Calu3 (cell line): ENCODE measurements at regions of chr14 and their contacts with region 1.

Region 1: GRCh38 chr14:63867933-63868921 is 15.4 kb downstream of the SYNE2 start:
- DNase-seq: no peak
- H3K4me3 Mint-ChIP-seq: peak overlapping the region; percentile 40
- H3K27ac Mint-ChIP-seq: peak overlapping the region; percentile 64
- H3K4me1 Mint-ChIP-seq: peaks cover 59% of the 10 kb centered on the region
- H3K27me3 Mint-ChIP-seq: no peaks in the 10 kb centered on the region
- CTCF ChIP-seq: no peak

Region 2: DNA sequence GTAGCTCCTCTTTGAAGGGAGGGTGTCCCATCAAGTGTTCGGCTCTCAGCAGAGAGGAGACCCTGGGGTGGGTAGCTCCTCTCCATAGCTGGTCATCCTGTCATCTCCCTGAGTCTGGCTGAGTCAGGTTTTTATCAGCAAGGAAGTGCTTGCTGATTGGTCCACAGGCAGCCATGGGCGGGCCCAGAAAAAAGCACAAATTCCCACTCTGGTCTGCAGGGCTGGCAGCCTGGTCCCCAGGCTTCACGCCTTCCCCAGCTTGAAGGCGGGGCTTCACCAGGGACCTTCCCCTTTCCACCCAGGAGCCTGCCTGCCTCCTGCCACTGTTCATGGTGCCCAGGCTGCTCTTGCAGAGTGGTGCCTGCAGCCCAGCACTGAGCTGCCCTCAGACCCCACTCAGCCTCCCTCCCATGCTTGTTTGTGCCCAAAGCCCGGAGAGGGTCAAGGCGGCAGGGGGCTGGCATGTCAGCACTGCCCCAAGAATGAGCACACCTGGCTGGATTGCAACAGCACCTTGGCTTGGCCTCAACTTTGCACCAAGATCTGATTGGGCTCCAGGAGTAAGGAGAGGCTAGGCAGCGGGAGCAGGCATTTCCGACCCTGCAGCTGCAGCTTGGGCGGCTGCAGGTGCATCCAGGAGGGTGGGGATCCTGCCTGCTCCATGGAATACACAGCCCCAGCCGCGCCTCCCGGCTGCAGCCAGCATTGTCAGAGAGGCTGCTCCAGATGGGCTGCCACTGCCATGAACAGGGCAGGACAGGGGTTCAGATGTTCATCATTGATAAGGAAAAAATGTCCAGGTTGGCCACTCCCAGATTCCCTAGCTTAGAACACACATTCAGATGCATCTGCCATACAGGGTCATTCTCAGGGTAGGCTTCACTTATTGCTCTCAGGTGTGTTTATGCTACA is 204.5 kb before region 1 on chr14:
- CTCF ChIA-PET with region 1: no interaction called
- intact Hi-C with region 1: loop called (anchors 10 kb)
- DNase-seq: peak; percentile 76
- H3K4me3 Mint-ChIP-seq: no peak overlapping the region
- H3K27ac Mint-ChIP-seq: no peak overlapping the region
- H3K4me1 Mint-ChIP-seq: peaks cover 34% of the 10 kb centered on the region
- H3K27me3 Mint-ChIP-seq: no peaks in the 10 kb centered on the region
- CTCF ChIP-seq: no peak

Region 3: GRCh38 chr14:63745858-63746425 is 122.3 kb before region 1 on chr14:
- CTCF ChIA-PET with region 1: no interaction called
- intact Hi-C with region 1: no loop called
- DNase-seq: peak; percentile 6
- H3K4me3 Mint-ChIP-seq: no peak overlapping the region
- H3K27ac Mint-ChIP-seq: no peak overlapping the region
- H3K4me1 Mint-ChIP-seq: peaks cover 16% of the 10 kb centered on the region
- H3K27me3 Mint-ChIP-seq: no peaks in the 10 kb centered on the region
- CTCF ChIP-seq: no peak

Region 4: DNA sequence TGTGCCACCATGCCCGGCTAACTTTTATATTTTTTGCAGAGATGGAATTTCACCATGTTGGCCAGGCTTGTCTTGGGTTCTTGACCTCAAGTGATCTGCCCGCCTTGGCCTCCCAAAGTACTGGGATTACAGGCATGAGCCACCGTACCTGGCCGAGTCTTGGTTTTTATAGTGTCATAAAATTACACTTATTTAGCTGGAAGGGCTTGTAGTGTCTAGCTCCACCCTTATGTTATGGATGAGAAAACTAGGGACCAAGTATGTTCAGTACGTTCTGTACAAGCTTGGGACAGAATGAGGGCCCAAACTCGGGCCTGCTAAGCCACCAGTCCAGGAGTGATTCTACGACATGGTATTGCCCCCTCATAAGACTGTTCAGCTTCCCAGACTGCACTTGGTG is 19.7 kb after region 1 on chr14:
- CTCF ChIA-PET with region 1: interaction called, 10 read pairs
- intact Hi-C with region 1: no loop called
- DNase-seq: no peak
- H3K4me3 Mint-ChIP-seq: no peak overlapping the region
- H3K27ac Mint-ChIP-seq: no peak overlapping the region
- H3K4me1 Mint-ChIP-seq: peaks cover 36% of the 10 kb centered on the region
- H3K27me3 Mint-ChIP-seq: no peaks in the 10 kb centered on the region
- CTCF ChIP-seq: no peak

Region 5: DNA sequence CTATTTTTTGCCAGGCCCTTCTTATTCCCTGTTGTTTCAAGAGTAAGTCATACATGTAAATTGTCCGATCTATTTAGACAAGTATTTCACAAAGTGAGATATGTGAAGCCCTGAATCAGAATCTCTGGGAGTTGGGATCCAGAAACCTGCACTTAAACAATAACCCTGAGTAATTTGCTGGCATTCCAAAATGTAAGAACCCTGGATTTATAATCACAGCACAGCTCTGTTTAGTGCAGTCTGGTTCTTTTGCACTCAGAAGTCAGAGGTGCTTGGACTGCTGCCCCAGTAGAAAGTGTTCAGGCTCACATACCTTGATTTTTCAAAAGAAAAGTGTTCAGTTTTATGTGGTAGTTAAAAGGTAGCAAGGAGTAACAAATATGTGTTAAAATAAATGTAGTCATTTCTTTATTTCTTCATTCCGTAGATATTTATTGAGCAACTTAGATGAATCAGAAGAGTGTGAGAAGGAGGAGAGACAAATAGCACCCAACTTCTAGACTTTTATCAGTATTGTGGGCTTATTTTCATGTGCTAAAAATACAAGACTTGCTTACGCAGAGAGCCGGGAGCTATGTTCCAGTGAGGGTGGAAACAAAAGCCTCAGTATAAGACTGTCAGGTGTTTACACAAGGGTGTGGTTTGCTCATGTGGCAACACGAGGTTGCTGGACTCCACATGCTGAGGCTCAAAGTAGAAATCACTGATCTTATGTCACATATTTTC is 54.6 kb after region 1 on chr14:
- CTCF ChIA-PET with region 1: interaction called, 8 read pairs
- intact Hi-C with region 1: loop called (anchors 2 kb)
- DNase-seq: peak; percentile 69
- H3K4me3 Mint-ChIP-seq: peak overlapping the region; percentile 38
- H3K27ac Mint-ChIP-seq: no peak overlapping the region
- H3K4me1 Mint-ChIP-seq: peaks cover 18% of the 10 kb centered on the region
- H3K27me3 Mint-ChIP-seq: no peaks in the 10 kb centered on the region
- CTCF ChIP-seq: no peak